Activated naive CD8-positive, alpha-beta T cell treated with anti-CD3 and anti-CD28 coated beads, Interleukin-2, amount 10 ng/mL, durations not matched to agents 7 days and 5 days (primary cell): ENCODE measurements at regions of chr1 and their contacts with region 1.

Region 1: GRCh38 chr1:42936309-42937078 is 22.2 kb downstream of the SLC2A1 start:
- DNase-seq: peak; percentile 30
- ATAC-seq: no peak
- H3K4me3 Mint-ChIP-seq: peak overlapping the region; percentile 6
- H3K27ac Mint-ChIP-seq: peak overlapping the region; percentile 80
- H3K4me1 Mint-ChIP-seq: peaks cover 87% of the 10 kb centered on the region
- H3K27me3 Mint-ChIP-seq: no peaks in the 10 kb centered on the region

Region 2: DNA sequence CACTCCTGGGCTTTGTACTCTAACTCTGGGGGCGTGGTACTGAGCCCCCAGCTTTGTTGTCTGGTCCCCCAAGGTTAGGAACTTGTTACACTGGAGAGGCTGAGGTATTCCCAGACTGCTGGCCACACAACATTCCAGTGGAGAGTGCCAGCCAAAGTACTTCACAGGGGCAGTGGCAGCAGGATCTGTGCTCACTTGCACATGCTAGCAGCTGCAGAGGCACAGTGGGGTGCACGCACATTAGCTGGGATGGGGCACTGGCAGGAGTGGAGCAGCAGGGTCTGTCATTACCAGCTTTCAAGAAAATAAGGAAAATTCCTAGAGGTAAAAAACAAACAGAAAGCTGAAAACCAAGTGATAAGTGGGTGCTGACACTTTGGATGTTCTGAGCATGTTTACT is 59.1 kb before region 1 on chr1:
- POLR2A ChIA-PET with region 1: no interaction called
- DNase-seq: no peak
- ATAC-seq: no peak
- H3K4me3 Mint-ChIP-seq: no peak overlapping the region
- H3K27ac Mint-ChIP-seq: no peak overlapping the region
- H3K4me1 Mint-ChIP-seq: peaks cover 4% of the 10 kb centered on the region
- H3K27me3 Mint-ChIP-seq: peaks cover 23% of the 10 kb centered on the region

Region 3: GRCh38 chr1:42952303-42953001 is 16.0 kb after region 1 on chr1:
- POLR2A ChIA-PET with region 1: interaction called, 35 read pairs
- DNase-seq: no peak
- ATAC-seq: peak; percentile 67
- H3K4me3 Mint-ChIP-seq: peak overlapping the region; percentile 78
- H3K27ac Mint-ChIP-seq: peak overlapping the region; percentile 85
- H3K4me1 Mint-ChIP-seq: peaks cover 72% of the 10 kb centered on the region
- H3K27me3 Mint-ChIP-seq: no peaks in the 10 kb centered on the region

Region 4: DNA sequence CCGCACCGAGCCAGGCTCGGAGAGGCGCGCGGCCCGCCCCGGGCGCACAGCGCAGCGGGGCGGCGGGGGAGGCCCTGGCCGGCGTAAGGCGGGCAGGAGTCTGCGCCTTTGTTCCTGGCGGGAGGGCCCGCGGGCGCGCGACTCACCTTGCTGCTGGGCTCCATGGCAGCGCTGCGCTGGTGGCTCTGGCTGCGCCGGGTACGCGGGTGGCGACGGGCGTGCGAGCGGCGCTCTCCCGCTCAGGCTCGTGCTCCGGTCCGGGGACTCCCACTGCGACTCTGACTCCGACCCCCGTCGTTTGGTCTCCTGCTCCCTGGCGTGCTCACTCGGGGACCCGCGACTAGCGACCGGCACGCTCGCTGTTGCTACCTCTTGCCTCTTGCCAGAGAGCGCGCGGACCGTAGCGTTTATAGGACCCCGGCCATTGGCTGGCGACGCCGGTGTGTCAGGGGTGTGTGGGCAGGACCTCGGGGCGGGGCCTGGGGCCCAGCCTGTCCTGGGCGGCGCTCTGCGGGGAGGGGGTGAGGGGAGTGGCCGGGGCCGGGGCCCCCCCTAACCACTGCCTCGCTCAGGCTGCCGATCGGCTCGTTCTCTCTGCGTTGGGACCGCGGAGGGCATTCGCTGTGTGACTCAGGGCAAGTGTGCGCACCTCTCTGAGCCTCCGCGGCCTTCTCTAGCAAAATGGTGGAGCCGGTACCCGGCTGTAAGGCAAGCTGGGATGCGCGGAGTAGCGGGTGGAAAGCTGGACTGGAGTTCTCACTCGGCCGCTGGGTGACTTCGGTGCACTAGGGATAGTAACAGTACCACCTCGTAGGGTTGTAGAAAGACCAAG is 22.2 kb after region 1 on chr1 and contains the start of gene SLC2A1:
- POLR2A ChIA-PET with region 1: interaction called, 33 read pairs
- DNase-seq: peak; percentile 94
- ATAC-seq: peak; percentile 87
- H3K4me3 Mint-ChIP-seq: peak within 1 kb of the TSS; percentile 97
- H3K27ac Mint-ChIP-seq: peak within 1 kb of the TSS; percentile 96
- H3K4me1 Mint-ChIP-seq: peaks cover 40% of the 10 kb centered on the region
- H3K27me3 Mint-ChIP-seq: no peaks in the 10 kb centered on the region
- total RNA-seq, gene SLC2A1: 80.8 to 82.3 TPM